CD4-positive, alpha-beta T cell (primary cell): ENCODE measurements at regions of chr1 and their contacts with region 1.

Region 1: DNA sequence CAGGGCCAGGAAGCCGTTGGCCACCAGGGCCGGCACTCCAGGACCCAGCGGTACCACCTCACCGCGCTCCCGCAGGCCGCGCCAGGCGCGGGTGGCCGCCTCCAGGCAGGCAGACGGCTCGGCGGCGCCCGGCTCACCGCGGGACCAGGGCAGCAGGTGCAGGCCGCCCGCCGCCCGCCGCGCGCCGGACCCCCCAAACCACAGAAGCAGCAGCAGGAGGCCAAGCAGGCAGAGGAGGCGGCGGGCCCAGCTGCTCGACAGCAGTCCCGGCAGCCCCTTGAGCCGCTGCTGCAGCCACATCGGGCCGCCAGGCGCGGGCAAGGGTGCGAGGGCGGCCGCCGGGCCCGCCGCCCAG is 312 bp downstream of the KIAA2013 start:
- DNase-seq: peak in 2 of 14 experiments; percentile 12
- ATAC-seq: peak; percentile 18
- H3K4me3 ChIP-seq: peak overlapping the region; percentile 48
- H3K4me3 Mint-ChIP-seq: no peak overlapping the region
- H3K27ac ChIP-seq: no peak overlapping the region
- H3K27ac Mint-ChIP-seq: peak overlapping the region; percentile 61
- H3K4me1 ChIP-seq: peaks cover 43% of the 10 kb centered on the region
- H3K4me1 Mint-ChIP-seq: peaks cover 29% of the 10 kb centered on the region
- H3K27me3 ChIP-seq: no peaks in the 10 kb centered on the region
- H3K27me3 Mint-ChIP-seq: no peaks in the 10 kb centered on the region
- CTCF ChIP-seq: no peak

Region 2: GRCh38 chr1:11214698-11215380 is 711.1 kb before region 1 on chr1:
- CTCF ChIA-PET with region 1: no interaction called
- POLR2A ChIA-PET with region 1: no interaction called
- intact Hi-C with region 1: no loop called
- DNase-seq: no peak
- ATAC-seq: no peak
- H3K4me3 ChIP-seq: no peak overlapping the region
- H3K4me3 Mint-ChIP-seq: no peak overlapping the region
- H3K27ac ChIP-seq: no peak overlapping the region
- H3K27ac Mint-ChIP-seq: no peak overlapping the region
- H3K4me1 ChIP-seq: no peaks in the 10 kb centered on the region
- H3K4me1 Mint-ChIP-seq: no peaks in the 10 kb centered on the region
- H3K27me3 ChIP-seq: no peaks in the 10 kb centered on the region
- H3K27me3 Mint-ChIP-seq: no peaks in the 10 kb centered on the region
- CTCF ChIP-seq: no peak

Region 3: DNA sequence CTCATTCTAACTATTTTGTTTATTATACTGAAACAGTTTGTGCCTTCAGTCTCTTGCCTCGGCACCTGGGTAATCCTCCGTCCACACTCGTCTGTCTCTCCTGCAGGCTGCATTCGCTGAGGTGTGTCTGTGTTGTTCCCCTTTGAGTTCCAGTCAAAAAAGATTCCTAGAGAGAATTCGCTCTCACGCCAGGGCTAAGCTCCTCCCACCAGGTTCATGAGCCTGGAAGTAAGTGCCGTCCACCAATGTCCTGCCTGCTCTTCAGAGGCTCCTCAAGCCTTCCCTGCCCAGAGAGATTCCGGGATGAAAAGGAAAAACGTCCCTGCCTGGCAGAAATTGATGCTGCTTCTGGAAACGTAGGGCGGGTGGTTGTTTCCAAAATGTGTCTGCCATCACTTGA is 12.6 kb before region 1 on chr1:
- CTCF ChIA-PET with region 1: no interaction called
- POLR2A ChIA-PET with region 1: interaction called, 69 read pairs
- intact Hi-C with region 1: loop called in 1 of 2 experiments (anchors 2 kb)
- DNase-seq: no peak
- ATAC-seq: no peak
- H3K4me3 ChIP-seq: no peak overlapping the region
- H3K4me3 Mint-ChIP-seq: no peak overlapping the region
- H3K27ac ChIP-seq: no peak overlapping the region
- H3K27ac Mint-ChIP-seq: no peak overlapping the region
- H3K4me1 ChIP-seq: peaks cover 12% of the 10 kb centered on the region
- H3K4me1 Mint-ChIP-seq: peaks cover 12% of the 10 kb centered on the region
- H3K27me3 ChIP-seq: no peaks in the 10 kb centered on the region
- H3K27me3 Mint-ChIP-seq: no peaks in the 10 kb centered on the region
- CTCF ChIP-seq: no peak

Region 4: GRCh38 chr1:13570924-13571323 is 1645.0 kb after region 1 on chr1:
- CTCF ChIA-PET with region 1: no interaction called
- POLR2A ChIA-PET with region 1: no interaction called
- intact Hi-C with region 1: no loop called
- DNase-seq: peak in 1 of 14 experiments; percentile 5
- ATAC-seq: no peak
- H3K4me3 ChIP-seq: no peak overlapping the region
- H3K4me3 Mint-ChIP-seq: no peak overlapping the region
- H3K27ac ChIP-seq: no peak overlapping the region
- H3K27ac Mint-ChIP-seq: no peak overlapping the region
- H3K4me1 ChIP-seq: no peaks in the 10 kb centered on the region
- H3K4me1 Mint-ChIP-seq: no peaks in the 10 kb centered on the region
- H3K27me3 ChIP-seq: peaks cover 0 to 2% of the 10 kb centered on the region in 2 experiments
- H3K27me3 Mint-ChIP-seq: peaks cover 19% of the 10 kb centered on the region
- CTCF ChIP-seq: no peak